Endothelial cell of umbilical vein (primary cell): ENCODE measurements at regions of chr3 and their contacts with region 1.

Region 1: DNA sequence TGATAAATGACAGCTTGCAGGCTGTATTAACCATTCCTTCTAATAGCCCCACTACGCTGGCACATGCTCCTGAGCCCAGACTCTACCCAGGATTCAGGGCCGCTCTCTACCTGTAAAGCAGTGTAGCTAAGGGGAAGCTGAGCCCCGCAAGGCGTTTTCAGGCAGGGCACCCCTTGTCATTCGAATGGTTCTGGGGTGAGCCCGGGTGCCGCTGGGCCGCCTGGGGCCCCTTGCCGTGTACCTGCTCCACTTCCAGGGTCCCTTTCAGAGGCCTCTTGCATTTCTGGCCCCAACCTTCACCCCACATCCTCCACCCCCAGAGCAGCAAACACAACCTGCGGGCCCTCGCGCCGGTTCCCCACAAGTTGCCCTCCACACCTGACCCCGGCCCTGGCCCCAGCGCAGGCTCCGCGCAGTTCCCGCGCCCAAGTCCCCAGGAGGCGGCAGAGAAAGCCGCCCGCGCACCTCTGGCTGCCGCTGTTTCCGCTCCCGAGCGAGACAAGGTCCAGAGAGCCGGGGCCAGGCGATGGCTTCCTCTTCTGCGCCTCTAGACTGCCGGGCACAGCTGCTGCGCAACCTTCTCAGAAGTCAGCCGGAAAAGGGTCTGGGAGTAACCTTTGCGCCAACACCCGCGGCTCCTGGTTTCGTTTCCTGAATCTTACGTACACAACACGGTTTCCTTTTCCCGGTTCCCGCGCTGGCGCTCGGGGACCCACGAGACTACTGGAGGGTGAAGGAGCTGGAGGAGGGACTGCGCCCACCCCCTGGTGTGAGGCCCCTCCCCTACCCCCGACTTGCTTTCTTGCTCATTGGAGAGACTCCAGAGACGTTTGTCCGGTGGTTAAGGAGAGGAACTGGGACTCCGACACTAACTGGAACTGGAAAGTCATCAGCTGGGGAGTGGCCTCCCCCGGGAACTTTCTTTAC is at the start of gene PLSCR1:
- DNase-seq: peak; percentile 99
- H3K4me3 ChIP-seq: peak within 1 kb of the TSS; percentile 66 to 78 (median 66)
- H3K27ac ChIP-seq: peak within 1 kb of the TSS; percentile 78
- H3K4me1 ChIP-seq: peaks cover 9% of the 10 kb centered on the region
- H3K27me3 ChIP-seq: no peaks in the 10 kb centered on the region
- CTCF ChIP-seq: no peak
- POLR2A ChIP-seq: peak; percentile 74
- total RNA-seq, gene PLSCR1: 65.6 and 78.7 TPM in 2 replicates

Region 2: DNA sequence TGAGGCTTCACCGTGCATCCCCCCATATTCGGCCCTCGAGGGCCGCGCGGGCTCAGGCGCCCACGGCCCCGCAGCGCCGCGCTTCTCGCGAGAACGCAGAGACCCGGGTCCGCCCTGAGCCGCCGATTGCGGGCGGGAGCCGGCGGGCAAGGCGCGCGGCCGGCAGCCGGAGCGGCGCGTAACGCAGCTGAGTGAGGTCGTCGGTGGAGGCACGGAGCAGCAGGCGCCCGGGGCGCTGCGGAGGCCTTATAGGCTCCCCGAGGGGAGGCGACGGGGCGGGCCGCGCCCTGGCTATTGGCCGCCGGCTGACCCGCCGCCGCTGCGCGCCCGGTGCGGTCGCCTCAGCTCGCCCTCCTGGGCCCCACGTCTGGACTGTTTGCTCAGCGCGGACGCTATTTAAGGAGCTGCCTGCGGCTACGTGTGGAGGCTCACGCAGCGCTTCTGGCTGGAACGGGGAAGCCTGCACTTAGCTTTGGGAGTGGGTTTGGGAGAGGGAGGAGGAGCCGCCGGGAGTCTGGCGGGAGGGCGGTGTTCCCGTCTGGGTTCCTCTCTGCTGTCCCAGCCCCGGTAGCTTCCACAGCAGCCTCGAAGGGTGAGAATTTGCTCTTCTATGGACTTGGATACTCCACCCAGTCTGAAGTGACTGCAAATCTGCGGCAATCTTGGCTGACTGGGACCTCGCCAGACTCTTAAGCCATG is 383.2 kb before region 1 on chr3 and contains the start of gene PLOD2:
- CTCF ChIA-PET with region 1: no interaction called
- POLR2A ChIA-PET with region 1: no interaction called
- dilution Hi-C with region 1: no loop called
- intact Hi-C with region 1: no loop called
- DNase-seq: peak; percentile 90
- H3K4me3 ChIP-seq: peak within 1 kb of the TSS; percentile 55 to 94 (median 80)
- H3K27ac ChIP-seq: peak within 1 kb of the TSS; percentile 90
- H3K4me1 ChIP-seq: peaks cover 72% of the 10 kb centered on the region
- H3K27me3 ChIP-seq: no peaks in the 10 kb centered on the region
- CTCF ChIP-seq: no peak
- POLR2A ChIP-seq: peak; percentile 98
- total RNA-seq, gene PLOD2: 193 and 228 TPM in 2 replicates

Region 3: DNA sequence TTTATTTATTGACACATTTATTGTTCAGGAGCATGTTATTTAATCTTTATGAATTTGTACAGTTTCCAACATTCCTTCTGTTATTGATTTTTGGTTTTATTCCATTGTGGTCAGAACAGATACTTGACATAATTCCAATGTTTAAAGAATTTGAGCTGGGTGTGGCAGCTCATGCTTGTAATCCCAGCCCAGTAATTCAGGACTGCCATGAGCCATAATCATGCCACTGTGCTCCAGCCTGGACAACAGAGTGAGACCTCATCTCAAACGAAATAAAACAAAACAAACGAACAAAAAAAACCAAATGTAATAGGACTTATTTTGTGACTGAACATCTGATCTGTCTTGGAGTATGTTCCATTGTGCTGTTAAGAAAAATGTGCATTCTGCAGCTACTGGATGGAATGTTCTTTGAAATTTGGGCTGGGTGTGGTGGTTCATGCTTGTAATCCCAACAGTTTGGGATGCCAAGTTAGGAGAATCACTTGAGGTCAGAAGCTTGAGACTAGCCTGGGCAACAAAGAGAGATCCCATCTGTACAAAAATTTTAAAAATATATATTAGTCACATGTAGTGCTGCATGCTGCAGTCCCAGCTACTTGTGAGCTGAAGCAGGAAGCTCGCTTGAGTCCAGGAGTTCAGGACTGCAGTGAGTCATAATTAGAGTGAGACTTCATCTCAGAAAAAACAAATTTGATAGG is 230.7 kb before region 1 on chr3:
- CTCF ChIA-PET with region 1: interaction called, 3 read pairs
- POLR2A ChIA-PET with region 1: no interaction called
- dilution Hi-C with region 1: no loop called
- intact Hi-C with region 1: loop called (anchors 1 kb)
- DNase-seq: peak; percentile 91
- H3K4me3 ChIP-seq: no peak overlapping the region
- H3K27ac ChIP-seq: peak overlapping the region; percentile 94
- H3K4me1 ChIP-seq: peaks cover 42% of the 10 kb centered on the region
- H3K27me3 ChIP-seq: no peaks in the 10 kb centered on the region
- CTCF ChIP-seq: no peak
- POLR2A ChIP-seq: peak; percentile 50

Region 4: GRCh38 chr3:146469150-146470017 is 74.9 kb before region 1 on chr3 and contains the start of gene PLSCR2:
- CTCF ChIA-PET with region 1: no interaction called
- POLR2A ChIA-PET with region 1: no interaction called
- dilution Hi-C with region 1: no loop called
- intact Hi-C with region 1: loop called (anchors 1 kb)
- DNase-seq: peak; percentile 26
- H3K4me3 ChIP-seq: peak within 1 kb of the TSS; percentile 43 to 59 (median 52)
- H3K27ac ChIP-seq: peak within 1 kb of the TSS; percentile 1
- H3K4me1 ChIP-seq: no peaks in the 10 kb centered on the region
- H3K27me3 ChIP-seq: no peaks in the 10 kb centered on the region
- CTCF ChIP-seq: no peak
- POLR2A ChIP-seq: no peak
- total RNA-seq, gene PLSCR2: not detected in 2 replicates

Region 5: DNA sequence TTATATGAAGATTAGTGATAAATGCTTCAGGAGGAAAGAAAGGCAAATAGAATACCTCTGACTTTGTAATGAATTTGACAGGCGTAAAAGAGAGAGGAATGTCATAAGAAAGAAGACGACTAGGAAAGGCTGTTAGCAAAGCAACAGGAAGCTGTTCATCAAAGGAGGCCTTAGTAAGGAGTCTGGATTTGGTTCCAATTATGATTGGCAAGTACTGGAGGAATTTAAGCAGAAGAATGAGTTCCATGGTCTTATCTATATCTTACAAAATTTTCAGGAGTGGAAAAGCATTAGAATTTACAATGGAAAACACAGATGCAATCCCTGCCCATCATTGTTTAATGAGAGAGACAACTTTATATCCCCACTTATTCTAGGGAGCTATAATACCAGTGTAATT is 13.7 kb before region 1 on chr3:
- CTCF ChIA-PET with region 1: interaction called, 3 read pairs
- POLR2A ChIA-PET with region 1: no interaction called
- dilution Hi-C with region 1: no loop called
- intact Hi-C with region 1: loop called (anchors 1 kb)
- DNase-seq: no peak
- H3K4me3 ChIP-seq: no peak overlapping the region
- H3K27ac ChIP-seq: no peak overlapping the region
- H3K4me1 ChIP-seq: no peaks in the 10 kb centered on the region
- H3K27me3 ChIP-seq: no peaks in the 10 kb centered on the region
- CTCF ChIP-seq: no peak
- POLR2A ChIP-seq: no peak